Naive thymus-derived CD4-positive, alpha-beta T cell (primary cell): ENCODE measurements at regions of chr5 and their contacts with region 1.

Region 1: GRCh38 chr5:56862909-56863308 is 46.5 kb upstream of the SETD9 start:
- DNase-seq: no peak
- ATAC-seq: peak; percentile 27
- H3K4me3 ChIP-seq: no peak overlapping the region
- H3K4me3 Mint-ChIP-seq: no peak overlapping the region
- H3K27ac ChIP-seq: no peak overlapping the region
- H3K27ac Mint-ChIP-seq: no peak overlapping the region
- H3K4me1 ChIP-seq: no peaks in the 10 kb centered on the region
- H3K4me1 Mint-ChIP-seq: peaks cover 3 to 40% (median 16%) of the 10 kb centered on the region in 7 donors
- H3K27me3 ChIP-seq: no peaks in the 10 kb centered on the region
- H3K27me3 Mint-ChIP-seq: no peaks in the 10 kb centered on the region

Region 2: DNA sequence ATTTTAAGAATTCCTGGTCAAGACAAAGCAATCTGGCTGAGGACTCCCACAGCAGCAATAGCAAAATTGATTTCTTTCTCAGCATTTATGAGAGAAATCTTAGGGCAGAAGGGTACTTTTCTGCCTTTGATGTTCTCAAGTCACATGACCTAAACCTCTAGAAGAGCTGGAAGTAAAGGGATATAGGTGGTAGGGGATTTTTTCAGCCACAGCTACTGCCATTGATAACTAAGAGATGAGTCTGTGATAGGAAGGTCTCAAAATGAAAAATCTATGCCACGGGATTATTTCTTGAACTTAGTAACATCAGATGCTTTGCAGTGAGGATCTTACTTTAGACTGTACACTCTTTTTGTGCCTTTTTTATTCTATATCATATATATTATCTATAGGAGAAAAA is 903.7 kb before region 1 on chr5:
- CTCF ChIA-PET with region 1: no interaction called
- POLR2A ChIA-PET with region 1: no interaction called
- intact Hi-C with region 1: loop called in 1 of 2 experiments (anchors 5 kb)
- DNase-seq: peak in 1 of 9 donors; percentile 47
- ATAC-seq: peak; percentile 84
- H3K4me3 ChIP-seq: no peak overlapping the region
- H3K4me3 Mint-ChIP-seq: peak overlapping the region in 4 of 10 donors; percentile 13 to 34 (median 32)
- H3K27ac ChIP-seq: peak overlapping the region; percentile 48
- H3K27ac Mint-ChIP-seq: peak overlapping the region in 7 of 9 donors; percentile 49 to 89 (median 69)
- H3K4me1 ChIP-seq: peaks cover 0 to 4% of the 10 kb centered on the region in 2 donors
- H3K4me1 Mint-ChIP-seq: peaks cover 15 to 59% (median 30%) of the 10 kb centered on the region in 7 donors
- H3K27me3 ChIP-seq: no peaks in the 10 kb centered on the region
- H3K27me3 Mint-ChIP-seq: no peaks in the 10 kb centered on the region

Region 3: GRCh38 chr5:55969956-55970355 is 893.0 kb before region 1 on chr5:
- CTCF ChIA-PET with region 1: no interaction called
- POLR2A ChIA-PET with region 1: no interaction called
- intact Hi-C with region 1: loop called in 1 of 2 experiments (anchors 10 kb)
- DNase-seq: no peak
- ATAC-seq: peak; percentile 23
- H3K4me3 ChIP-seq: no peak overlapping the region
- H3K4me3 Mint-ChIP-seq: peak overlapping the region; percentile 25 to 81 (median 59)
- H3K27ac ChIP-seq: peak overlapping the region; percentile 2
- H3K27ac Mint-ChIP-seq: peak overlapping the region; percentile 29 to 94 (median 79)
- H3K4me1 ChIP-seq: peaks cover 0 to 41% of the 10 kb centered on the region in 2 donors
- H3K4me1 Mint-ChIP-seq: peaks cover 34 to 90% (median 68%) of the 10 kb centered on the region in 7 donors
- H3K27me3 ChIP-seq: no peaks in the 10 kb centered on the region
- H3K27me3 Mint-ChIP-seq: no peaks in the 10 kb centered on the region

Region 4: GRCh38 chr5:56852228-56853000 is 10.5 kb before region 1 on chr5:
- CTCF ChIA-PET with region 1: no interaction called
- POLR2A ChIA-PET with region 1: no interaction called
- intact Hi-C with region 1: loop called in 1 of 2 experiments (anchors 2 kb)
- DNase-seq: no peak
- ATAC-seq: peak; percentile 48
- H3K4me3 ChIP-seq: no peak overlapping the region
- H3K4me3 Mint-ChIP-seq: peak overlapping the region; percentile 46 to 73 (median 66)
- H3K27ac ChIP-seq: no peak overlapping the region
- H3K27ac Mint-ChIP-seq: peak overlapping the region; percentile 19 to 89 (median 64)
- H3K4me1 ChIP-seq: peaks cover 40 to 72% of the 10 kb centered on the region in 2 donors
- H3K4me1 Mint-ChIP-seq: peaks cover 71 to 98% (median 90%) of the 10 kb centered on the region in 7 donors
- H3K27me3 ChIP-seq: no peaks in the 10 kb centered on the region
- H3K27me3 Mint-ChIP-seq: no peaks in the 10 kb centered on the region